ENCODE measurements at regions of chr14 and their contacts with region 1.

Region 1: DNA sequence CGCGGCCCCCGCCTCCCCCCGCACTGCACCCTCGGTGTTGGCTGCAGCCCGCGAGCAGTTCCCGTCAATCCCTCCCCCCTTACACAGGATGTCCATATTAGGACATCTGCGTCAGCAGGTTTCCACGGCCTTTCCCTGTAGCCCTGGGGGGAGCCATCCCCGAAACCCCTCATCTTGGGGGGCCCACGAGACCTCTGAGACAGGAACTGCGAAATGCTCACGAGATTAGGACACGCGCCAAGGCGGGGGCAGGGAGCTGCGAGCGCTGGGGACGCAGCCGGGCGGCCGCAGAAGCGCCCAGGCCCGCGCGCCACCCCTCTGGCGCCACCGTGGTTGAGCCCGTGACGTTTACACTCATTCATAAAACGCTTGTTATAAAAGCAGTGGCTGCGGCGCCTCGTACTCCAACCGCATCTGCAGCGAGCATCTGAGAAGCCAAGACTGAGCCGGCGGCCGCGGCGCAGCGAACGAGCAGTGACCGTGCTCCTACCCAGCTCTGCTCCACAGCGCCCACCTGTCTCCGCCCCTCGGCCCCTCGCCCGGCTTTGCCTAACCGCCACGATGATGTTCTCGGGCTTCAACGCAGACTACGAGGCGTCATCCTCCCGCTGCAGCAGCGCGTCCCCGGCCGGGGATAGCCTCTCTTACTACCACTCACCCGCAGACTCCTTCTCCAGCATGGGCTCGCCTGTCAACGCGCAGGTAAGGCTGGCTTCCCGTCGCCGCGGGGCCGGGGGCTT is at the start of gene FOS:
- DNase-seq: peak; percentile 97 to 99 (median 98)
- H3K4me3 ChIP-seq: peak within 1 kb of the TSS; percentile 89 to 95
- H3K4me3 Mint-ChIP-seq: peak within 1 kb of the TSS; percentile 90 to 98 (median 94)
- H3K27ac ChIP-seq: peak within 1 kb of the TSS; percentile 75
- H3K27ac Mint-ChIP-seq: peak within 1 kb of the TSS; percentile 98 to 100 (median 99)
- H3K4me1 ChIP-seq: peaks cover 56% of the 10 kb centered on the region
- H3K4me1 Mint-ChIP-seq: peaks cover 41 to 88% (median 53%) of the 10 kb centered on the region in 4 donors
- H3K27me3 ChIP-seq: peaks cover 6% of the 10 kb centered on the region
- H3K27me3 Mint-ChIP-seq: peaks cover 0 to 24% of the 10 kb centered on the region in 2 donors
- total RNA-seq, gene FOS: 4.1 to 4.3 TPM

Region 2: GRCh38 chr14:75242546-75243273 is 35.9 kb before region 1 on chr14:
- CTCF ChIA-PET with region 1: interaction called, 6 read pairs
- POLR2A ChIA-PET with region 1: interaction called, 7 read pairs
- intact Hi-C with region 1: loop called (anchors 1 kb)
- DNase-seq: no peak
- H3K4me3 ChIP-seq: no peak overlapping the region
- H3K4me3 Mint-ChIP-seq: no peak overlapping the region
- H3K27ac ChIP-seq: no peak overlapping the region
- H3K27ac Mint-ChIP-seq: peak overlapping the region in 1 of 7 donors; percentile 38
- H3K4me1 ChIP-seq: peaks cover 20% of the 10 kb centered on the region
- H3K4me1 Mint-ChIP-seq: peaks cover 12 to 24% (median 17%) of the 10 kb centered on the region in 4 donors
- H3K27me3 ChIP-seq: no peaks in the 10 kb centered on the region
- H3K27me3 Mint-ChIP-seq: no peaks in the 10 kb centered on the region

Region 3: DNA sequence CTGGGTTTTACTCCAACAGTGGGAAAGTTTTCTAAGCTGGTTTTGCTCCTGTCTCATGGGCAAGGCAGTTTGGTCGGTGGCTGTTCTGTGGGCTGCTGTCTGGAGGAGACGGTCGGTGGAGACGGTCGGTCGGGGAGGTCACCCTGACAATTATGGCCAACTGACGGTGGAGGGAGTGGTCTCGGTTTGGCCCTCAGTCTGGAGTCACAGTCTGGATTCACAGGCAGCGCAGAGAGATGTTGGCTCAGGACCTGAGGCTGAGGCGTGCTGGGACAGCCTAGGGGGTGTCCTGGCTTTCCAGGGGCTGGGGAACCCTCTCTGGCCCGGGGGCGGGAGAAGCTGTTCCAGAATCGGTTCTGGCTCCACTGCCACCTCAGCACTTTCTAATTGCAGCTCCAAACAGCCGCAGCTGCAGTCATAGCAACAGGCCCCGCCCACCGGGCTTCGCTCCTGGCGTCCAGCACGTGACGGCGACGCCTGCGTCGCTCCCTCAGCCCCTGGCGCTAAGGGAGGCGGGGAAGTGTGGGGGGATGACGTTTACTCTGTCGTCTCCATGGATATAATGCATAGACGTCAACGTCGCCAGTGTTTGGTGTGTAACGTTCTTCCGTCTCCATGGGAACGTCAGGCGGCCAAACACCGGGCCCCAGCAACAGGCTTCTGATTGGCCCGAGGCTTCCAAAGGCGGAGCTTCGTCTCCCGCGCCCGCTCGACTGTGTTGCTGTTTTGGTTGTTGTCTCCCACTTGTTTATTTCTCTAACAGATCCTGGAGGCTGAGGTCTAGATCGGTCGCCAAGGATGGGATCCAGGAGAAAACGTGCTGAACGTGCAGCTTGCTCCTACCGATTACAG is 19.8 kb before region 1 on chr14:
- CTCF ChIA-PET with region 1: interaction called, 4 read pairs
- POLR2A ChIA-PET with region 1: interaction called, 91 read pairs
- intact Hi-C with region 1: loop called (anchors 1 kb)
- DNase-seq: peak; percentile 99 to 100 (median 100)
- H3K4me3 ChIP-seq: peak overlapping the region; percentile 52 to 54
- H3K4me3 Mint-ChIP-seq: peak overlapping the region; percentile 82 to 90 (median 88)
- H3K27ac ChIP-seq: peak overlapping the region; percentile 95
- H3K27ac Mint-ChIP-seq: peak overlapping the region; percentile 98 to 100 (median 100)
- H3K4me1 ChIP-seq: peaks cover 23% of the 10 kb centered on the region
- H3K4me1 Mint-ChIP-seq: peaks cover 21 to 44% (median 33%) of the 10 kb centered on the region in 4 donors
- H3K27me3 ChIP-seq: no peaks in the 10 kb centered on the region
- H3K27me3 Mint-ChIP-seq: no peaks in the 10 kb centered on the region

Region 4: GRCh38 chr14:75307700-75308379 is 29.2 kb after region 1 on chr14:
- CTCF ChIA-PET with region 1: no interaction called
- POLR2A ChIA-PET with region 1: no interaction called
- intact Hi-C with region 1: no loop called
- DNase-seq: peak; percentile 56 to 68 (median 63)
- H3K4me3 ChIP-seq: no peak overlapping the region
- H3K4me3 Mint-ChIP-seq: peak overlapping the region in 1 of 8 donors; percentile 26
- H3K27ac ChIP-seq: no peak overlapping the region
- H3K27ac Mint-ChIP-seq: no peak overlapping the region
- H3K4me1 ChIP-seq: peaks cover 6% of the 10 kb centered on the region
- H3K4me1 Mint-ChIP-seq: peaks cover 4 to 19% (median 8%) of the 10 kb centered on the region in 4 donors
- H3K27me3 ChIP-seq: no peaks in the 10 kb centered on the region
- H3K27me3 Mint-ChIP-seq: peaks cover 1 to 3% of the 10 kb centered on the region in 2 donors